ENCODE measurements at regions of chr19 and their contacts with region 1.

Region 1: GRCh38 chr19:42596391-42597072 is 1.8 kb upstream of the CEACAM8 start:
- DNase-seq: peak; percentile 79
- H3K4me3 Mint-ChIP-seq: no peak overlapping the region
- H3K27ac Mint-ChIP-seq: no peak overlapping the region
- H3K4me1 Mint-ChIP-seq: no peaks in the 10 kb centered on the region
- H3K27me3 Mint-ChIP-seq: no peaks in the 10 kb centered on the region

Region 2: GRCh38 chr19:42343344-42344110 is 253.0 kb before region 1 on chr19:
- intact Hi-C with region 1: no loop called
- DNase-seq: no peak
- H3K4me3 Mint-ChIP-seq: no peak overlapping the region
- H3K27ac Mint-ChIP-seq: no peak overlapping the region
- H3K4me1 Mint-ChIP-seq: no peaks in the 10 kb centered on the region
- H3K27me3 Mint-ChIP-seq: no peaks in the 10 kb centered on the region

Region 3: GRCh38 chr19:42567561-42567960 is 29.0 kb before region 1 on chr19:
- intact Hi-C with region 1: loop called (anchors 1 kb)
- DNase-seq: no peak
- H3K4me3 Mint-ChIP-seq: no peak overlapping the region
- H3K27ac Mint-ChIP-seq: no peak overlapping the region
- H3K4me1 Mint-ChIP-seq: peaks cover 2% of the 10 kb centered on the region
- H3K27me3 Mint-ChIP-seq: peaks cover 20% of the 10 kb centered on the region

Region 4: GRCh38 chr19:43624933-43625332 is 1028.4 kb after region 1 on chr19:
- intact Hi-C with region 1: no loop called
- DNase-seq: peak; percentile 95
- H3K4me3 Mint-ChIP-seq: peak overlapping the region; percentile 34
- H3K27ac Mint-ChIP-seq: no peak overlapping the region
- H3K4me1 Mint-ChIP-seq: peaks cover 24% of the 10 kb centered on the region
- H3K27me3 Mint-ChIP-seq: peaks cover 4% of the 10 kb centered on the region

Measured in activated CD4-positive, alpha-beta T cell treated with anti-CD3 and anti-CD28 coated beads, Interleukin-2, amount 10 ng/mL, durations not matched to agents 24 days and 14 days (primary cell).